IMR-90 (cell line): ENCODE measurements at regions of chr7 and their contacts with region 1.

Region 1: GRCh38 chr7:116588641-116589594 is 64.1 kb downstream of the CAV1 start:
- DNase-seq: peak; percentile 81
- ATAC-seq: peak; percentile 60
- H3K4me3 ChIP-seq: no peak overlapping the region
- H3K27ac ChIP-seq: peak overlapping the region; percentile 80
- H3K4me1 ChIP-seq: peaks cover 9% of the 10 kb centered on the region
- H3K27me3 ChIP-seq: no peaks in the 10 kb centered on the region
- CTCF ChIP-seq: peak; percentile 78
- POLR2A ChIP-seq: 0 out of 2 replicates have a peak, but pooled peaks have one; percentile 17
- RAD21 ChIP-seq: peak; percentile 87

Region 2: DNA sequence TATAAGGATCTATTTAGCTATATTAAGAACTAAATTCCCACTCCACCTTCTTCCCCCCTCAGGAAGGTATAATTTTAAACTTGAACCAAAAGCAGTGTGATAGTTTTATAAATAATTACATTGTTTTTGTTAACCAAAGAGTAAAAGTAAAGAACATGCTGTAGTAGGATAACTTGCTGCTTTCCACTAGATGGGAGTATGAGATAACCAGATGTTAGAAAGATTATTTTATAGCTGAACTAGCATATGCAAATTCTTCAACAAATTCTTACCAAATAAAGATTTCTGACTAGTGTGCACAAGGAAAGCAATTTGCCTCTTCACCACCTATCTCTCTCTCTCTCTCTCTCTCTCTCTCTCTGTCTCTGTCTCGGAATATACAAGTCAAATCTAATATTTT is 346.7 kb before region 1 on chr7:
- CTCF ChIA-PET with region 1: interaction called, 4 read pairs
- POLR2A ChIA-PET with region 1: no interaction called
- dilution Hi-C with region 1: no loop called
- in situ Hi-C with region 1: no loop called
- intact Hi-C with region 1: loop called (anchors 1 kb)
- DNase-seq: peak; percentile 51
- ATAC-seq: peak; percentile 69
- H3K4me3 ChIP-seq: no peak overlapping the region
- H3K27ac ChIP-seq: no peak overlapping the region
- H3K4me1 ChIP-seq: peaks cover 2% of the 10 kb centered on the region; the same call in 1 of the 2 replicates
- H3K27me3 ChIP-seq: no peaks in the 10 kb centered on the region
- CTCF ChIP-seq: peak; percentile 54
- POLR2A ChIP-seq: no peak
- RAD21 ChIP-seq: peak; percentile 44

Region 3: DNA sequence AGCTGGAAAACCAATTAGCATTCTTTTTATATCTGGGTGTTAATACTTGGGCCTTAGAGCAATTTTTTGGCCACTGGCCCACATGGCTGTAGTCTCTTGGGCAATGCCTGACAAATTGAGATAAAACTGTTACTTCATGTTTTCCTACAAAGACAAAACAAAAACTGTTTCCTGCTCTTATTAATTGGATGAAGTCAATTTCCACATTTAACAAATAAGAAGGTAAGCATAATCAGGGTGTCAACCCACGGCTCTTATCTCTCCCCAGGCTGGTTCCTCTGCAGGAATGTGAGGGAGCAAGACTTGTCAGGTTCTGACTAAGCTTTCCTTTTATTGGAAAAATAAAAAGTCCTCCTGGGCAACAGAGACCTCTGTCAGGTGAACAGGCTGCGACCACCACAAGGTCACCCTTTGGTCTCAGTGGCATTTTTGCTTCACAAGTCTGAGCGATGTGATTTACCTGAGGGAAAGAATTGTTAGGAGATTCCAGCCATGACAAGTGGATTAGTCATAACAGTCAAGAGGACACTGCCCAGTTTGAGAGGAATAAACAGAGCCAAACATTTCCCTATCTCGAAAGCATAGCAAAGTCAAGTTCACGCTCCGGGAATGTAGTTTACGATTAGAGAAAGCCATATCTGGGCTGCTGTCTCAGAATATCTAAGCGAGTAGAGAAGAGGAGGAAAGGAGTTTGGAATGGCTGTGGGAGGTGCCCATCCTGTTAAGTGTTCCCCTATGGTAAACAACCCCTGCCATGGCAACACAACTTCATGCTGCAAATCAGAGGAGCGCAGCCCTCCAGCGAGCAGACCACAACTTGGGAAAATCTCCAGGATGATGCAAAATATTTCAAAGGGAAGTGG is 234.1 kb before region 1 on chr7:
- CTCF ChIA-PET with region 1: no interaction called
- POLR2A ChIA-PET with region 1: no interaction called
- dilution Hi-C with region 1: no loop called
- in situ Hi-C with region 1: no loop called
- intact Hi-C with region 1: loop called (anchors 1 kb)
- DNase-seq: peak; percentile 98
- ATAC-seq: peak; percentile 92
- H3K4me3 ChIP-seq: peak overlapping the region; percentile 0; the same call in 1 of the 2 replicates
- H3K27ac ChIP-seq: peak overlapping the region; percentile 69
- H3K4me1 ChIP-seq: peaks cover 24% of the 10 kb centered on the region
- H3K27me3 ChIP-seq: no peaks in the 10 kb centered on the region
- CTCF ChIP-seq: no peak
- POLR2A ChIP-seq: peak; percentile 41; the same call in 1 of the 2 replicates
- RAD21 ChIP-seq: peak; percentile 34

Region 4: DNA sequence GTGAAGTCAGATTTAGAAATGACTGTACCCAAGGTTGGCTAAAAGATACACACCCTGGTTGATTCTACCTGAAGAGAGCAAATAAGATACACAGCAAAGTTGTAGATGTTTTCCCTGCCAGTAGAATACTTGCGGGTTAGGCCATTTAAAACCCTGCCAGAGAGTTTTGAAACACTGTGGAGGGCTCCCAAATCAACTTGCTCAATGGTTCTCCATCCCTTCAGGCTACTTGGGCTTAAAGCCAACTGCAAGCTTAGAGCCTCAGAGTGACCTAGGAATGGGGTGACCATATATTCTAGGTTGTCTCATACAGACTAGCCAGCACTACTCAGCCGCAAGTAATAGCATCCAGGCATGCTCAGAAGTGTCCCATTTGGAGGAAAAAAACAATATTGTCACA is 54.1 kb before region 1 on chr7:
- CTCF ChIA-PET with region 1: interaction called, 4 read pairs
- POLR2A ChIA-PET with region 1: interaction called, 7 read pairs
- dilution Hi-C with region 1: no loop called
- in situ Hi-C with region 1: loop called (anchors 10 kb)
- intact Hi-C with region 1: no loop called
- DNase-seq: no peak
- ATAC-seq: peak; percentile 8; the same call in 1 of the 2 replicates
- H3K4me3 ChIP-seq: no peak overlapping the region
- H3K27ac ChIP-seq: no peak overlapping the region
- H3K4me1 ChIP-seq: peaks cover 22% of the 10 kb centered on the region
- H3K27me3 ChIP-seq: no peaks in the 10 kb centered on the region
- CTCF ChIP-seq: no peak
- POLR2A ChIP-seq: no peak
- RAD21 ChIP-seq: no peak

Region 5: GRCh38 chr7:116671681-116672595 is 83.0 kb after region 1 on chr7 and contains the start of gene MET:
- CTCF ChIA-PET with region 1: no interaction called
- POLR2A ChIA-PET with region 1: no interaction called
- dilution Hi-C with region 1: no loop called
- in situ Hi-C with region 1: no loop called
- intact Hi-C with region 1: loop called (anchors 5 kb)
- DNase-seq: peak; percentile 72
- ATAC-seq: peak; percentile 93
- H3K4me3 ChIP-seq: peak within 1 kb of the TSS; percentile 69
- H3K27ac ChIP-seq: peak within 1 kb of the TSS; percentile 78
- H3K4me1 ChIP-seq: peaks cover 5% of the 10 kb centered on the region
- H3K27me3 ChIP-seq: no peaks in the 10 kb centered on the region
- CTCF ChIP-seq: peak; percentile 68
- POLR2A ChIP-seq: peak; percentile 50; the same call in 1 of the 2 replicates
- RAD21 ChIP-seq: peak; percentile 82
- total RNA-seq, gene MET: 68.0 and 84.6 TPM in 2 replicates

Region 6: GRCh38 chr7:116809636-116810266 is 220.8 kb after region 1 on chr7:
- CTCF ChIA-PET with region 1: interaction called, 3 read pairs
- POLR2A ChIA-PET with region 1: no interaction called
- dilution Hi-C with region 1: no loop called
- in situ Hi-C with region 1: loop called (anchors 5 kb)
- intact Hi-C with region 1: loop called (anchors 1 kb)
- DNase-seq: peak; percentile 77
- ATAC-seq: peak; percentile 88
- H3K4me3 ChIP-seq: no peak overlapping the region
- H3K27ac ChIP-seq: no peak overlapping the region
- H3K4me1 ChIP-seq: peaks cover 6% of the 10 kb centered on the region
- H3K27me3 ChIP-seq: no peaks in the 10 kb centered on the region
- CTCF ChIP-seq: peak; percentile 79
- POLR2A ChIP-seq: no peak
- RAD21 ChIP-seq: peak; percentile 93

Region 7: DNA sequence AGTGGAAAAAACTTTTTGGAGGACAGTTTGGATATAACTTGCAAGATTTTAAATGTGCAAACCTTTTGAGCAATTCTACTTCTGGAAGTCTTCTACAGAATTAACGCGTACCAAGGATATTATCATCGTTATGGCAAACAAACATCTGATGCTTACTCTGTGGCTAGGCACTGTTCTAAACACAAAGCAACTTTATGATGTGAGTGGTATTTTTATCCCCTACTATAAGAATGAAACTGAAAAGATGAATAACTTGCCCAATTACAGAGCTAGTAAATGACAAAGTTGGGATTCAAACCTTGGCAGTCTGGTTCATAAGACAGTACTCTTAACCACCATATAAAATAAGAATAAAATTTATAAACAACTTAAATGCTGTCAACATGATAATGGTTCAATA is 822.6 kb after region 1 on chr7:
- CTCF ChIA-PET with region 1: no interaction called
- POLR2A ChIA-PET with region 1: no interaction called
- dilution Hi-C with region 1: no loop called
- in situ Hi-C with region 1: no loop called
- intact Hi-C with region 1: no loop called
- DNase-seq: no peak
- ATAC-seq: no peak
- H3K4me3 ChIP-seq: no peak overlapping the region
- H3K27ac ChIP-seq: no peak overlapping the region
- H3K4me1 ChIP-seq: no peaks in the 10 kb centered on the region
- H3K27me3 ChIP-seq: no peaks in the 10 kb centered on the region
- CTCF ChIP-seq: no peak
- POLR2A ChIP-seq: no peak
- RAD21 ChIP-seq: no peak